Activated CD4-positive, alpha-beta memory T cell treated with anti-CD3 and anti-CD28 coated beads for 36 hours (primary cell): ENCODE measurements at regions of chr16 and their contacts with region 1.

Region 1: GRCh38 chr16:53549970-53550690 is 47.1 kb upstream of the AKTIP start:
- DNase-seq: peak; percentile 64
- H3K4me3 Mint-ChIP-seq: no peak overlapping the region
- H3K27ac Mint-ChIP-seq: no peak overlapping the region
- H3K4me1 Mint-ChIP-seq: peaks cover 19% of the 10 kb centered on the region
- H3K27me3 Mint-ChIP-seq: no peaks in the 10 kb centered on the region

Region 2: GRCh38 chr16:53509906-53510703 is 40.0 kb before region 1 on chr16:
- CTCF ChIA-PET with region 1: interaction called, 4 read pairs
- POLR2A ChIA-PET with region 1: no interaction called
- intact Hi-C with region 1: loop called (anchors 5 kb)
- DNase-seq: peak; percentile 60
- H3K4me3 Mint-ChIP-seq: peak overlapping the region; percentile 18
- H3K27ac Mint-ChIP-seq: no peak overlapping the region
- H3K4me1 Mint-ChIP-seq: peaks cover 35% of the 10 kb centered on the region
- H3K27me3 Mint-ChIP-seq: no peaks in the 10 kb centered on the region

Region 3: DNA sequence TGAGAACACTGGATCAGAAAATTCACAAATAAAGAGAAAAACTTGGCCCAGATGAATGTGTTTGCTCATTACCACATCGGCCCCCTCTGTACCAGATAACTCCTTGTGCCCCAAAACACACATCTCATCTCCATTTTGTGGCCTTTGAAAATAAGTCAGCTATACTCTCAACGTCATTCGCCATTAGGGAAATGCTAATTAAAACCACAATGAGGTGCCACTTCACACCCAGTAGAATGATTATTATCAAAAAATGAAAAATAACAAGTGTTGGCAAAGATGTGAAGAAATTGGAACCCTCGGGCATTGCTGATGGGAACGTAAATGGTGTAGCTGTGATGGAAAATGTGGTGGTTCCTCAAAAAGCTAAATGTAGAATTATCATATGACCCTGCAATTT is 12.5 kb before region 1 on chr16:
- CTCF ChIA-PET with region 1: interaction called, 20 read pairs
- POLR2A ChIA-PET with region 1: no interaction called
- intact Hi-C with region 1: no loop called
- DNase-seq: no peak
- H3K4me3 Mint-ChIP-seq: no peak overlapping the region
- H3K27ac Mint-ChIP-seq: no peak overlapping the region
- H3K4me1 Mint-ChIP-seq: peaks cover 28% of the 10 kb centered on the region
- H3K27me3 Mint-ChIP-seq: no peaks in the 10 kb centered on the region

Region 4: GRCh38 chr16:53642094-53642493 is 92.0 kb after region 1 on chr16:
- CTCF ChIA-PET with region 1: no interaction called
- POLR2A ChIA-PET with region 1: no interaction called
- intact Hi-C with region 1: no loop called
- DNase-seq: no peak
- H3K4me3 Mint-ChIP-seq: no peak overlapping the region
- H3K27ac Mint-ChIP-seq: no peak overlapping the region
- H3K4me1 Mint-ChIP-seq: no peaks in the 10 kb centered on the region
- H3K27me3 Mint-ChIP-seq: no peaks in the 10 kb centered on the region

Region 5: GRCh38 chr16:54286090-54286993 is 736.2 kb after region 1 on chr16 and contains the start of gene IRX3:
- CTCF ChIA-PET with region 1: interaction called, 4 read pairs
- POLR2A ChIA-PET with region 1: no interaction called
- intact Hi-C with region 1: loop called (anchors 10 kb)
- DNase-seq: no peak
- H3K4me3 Mint-ChIP-seq: peak within 1 kb of the TSS; percentile 59
- H3K27ac Mint-ChIP-seq: no peak within 1 kb of the TSS
- H3K4me1 Mint-ChIP-seq: peaks cover 31% of the 10 kb centered on the region
- H3K27me3 Mint-ChIP-seq: peaks cover 64% of the 10 kb centered on the region
- total RNA-seq, gene IRX3: 0.27 TPM in 1 of 2 experiments, not detected in the other

Region 6: DNA sequence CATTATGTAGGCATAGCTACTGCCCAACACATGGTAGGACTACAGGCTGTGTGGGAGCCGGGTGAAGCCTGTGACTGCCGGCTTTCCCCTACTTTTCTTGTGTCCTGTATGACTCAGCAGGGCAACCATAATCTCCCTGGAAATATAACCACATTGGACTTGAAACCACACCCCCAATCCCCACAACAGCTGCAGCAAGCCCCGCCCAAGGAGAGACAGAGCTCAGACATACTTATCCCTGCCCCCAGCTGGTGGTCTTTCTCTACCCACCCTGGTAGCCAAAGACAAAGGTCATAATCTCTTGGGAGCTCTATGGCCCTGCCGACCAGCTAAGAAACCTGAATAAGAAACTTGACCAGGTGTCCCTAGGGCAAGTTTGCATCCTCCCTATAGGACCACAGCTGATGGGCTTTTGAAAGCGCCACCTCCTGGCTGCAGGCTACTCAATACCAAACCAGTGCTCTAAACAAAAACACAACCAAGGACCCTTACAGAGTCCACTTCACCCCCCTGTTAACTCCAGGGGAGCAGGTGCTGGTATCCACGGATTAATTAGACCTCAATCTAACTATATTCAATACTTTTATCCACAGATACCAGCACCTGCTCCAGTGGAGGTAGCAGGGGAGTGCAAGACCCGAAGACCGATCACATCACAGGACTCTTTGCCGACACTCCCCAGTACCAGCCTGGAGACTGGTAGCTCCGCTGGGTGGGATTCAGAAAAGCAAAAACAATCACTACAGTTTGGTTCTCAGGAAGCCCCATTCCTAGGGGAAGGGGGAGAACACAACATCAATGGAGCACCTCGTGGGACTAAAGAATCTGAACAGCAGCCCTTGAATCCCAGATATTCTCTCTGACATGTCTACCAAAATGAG is 1471.7 kb after region 1 on chr16:
- CTCF ChIA-PET with region 1: no interaction called
- POLR2A ChIA-PET with region 1: no interaction called
- intact Hi-C with region 1: loop called (anchors 5 kb)
- DNase-seq: no peak
- H3K4me3 Mint-ChIP-seq: no peak overlapping the region
- H3K27ac Mint-ChIP-seq: no peak overlapping the region
- H3K4me1 Mint-ChIP-seq: no peaks in the 10 kb centered on the region
- H3K27me3 Mint-ChIP-seq: peaks cover 13% of the 10 kb centered on the region

Region 7: GRCh38 chr16:55257966-55258613 is 1708.0 kb after region 1 on chr16:
- CTCF ChIA-PET with region 1: interaction called, 3 read pairs
- POLR2A ChIA-PET with region 1: no interaction called
- intact Hi-C with region 1: loop called (anchors 5 kb)
- DNase-seq: peak; percentile 65
- H3K4me3 Mint-ChIP-seq: no peak overlapping the region
- H3K27ac Mint-ChIP-seq: no peak overlapping the region
- H3K4me1 Mint-ChIP-seq: no peaks in the 10 kb centered on the region
- H3K27me3 Mint-ChIP-seq: no peaks in the 10 kb centered on the region